ENCODE measurements at regions of chr6 and their contacts with region 1.

Region 1: DNA sequence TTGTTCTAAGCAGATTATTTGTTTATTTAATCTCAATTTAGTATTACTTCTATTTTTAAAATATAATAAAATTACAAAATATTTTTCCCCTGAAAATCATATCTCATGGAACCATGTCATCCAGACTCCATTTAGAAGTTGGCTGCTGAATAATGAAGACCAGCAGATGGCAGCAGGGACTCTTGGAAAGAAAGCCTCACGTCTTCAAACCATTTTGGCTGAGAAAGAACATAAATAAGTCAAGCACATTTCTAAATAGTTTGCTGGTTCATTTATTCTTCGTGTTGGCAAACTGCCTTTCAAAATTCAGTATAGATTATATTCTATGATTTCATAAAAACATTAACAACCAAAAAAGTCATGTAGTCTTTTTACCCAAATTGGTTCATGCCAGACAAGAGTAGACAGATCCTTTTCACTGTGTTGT is 71.7 kb downstream of the RCAN2 start:
- DNase-seq: peak; percentile 36
- CTCF ChIP-seq: peak; percentile 55

Region 2: DNA sequence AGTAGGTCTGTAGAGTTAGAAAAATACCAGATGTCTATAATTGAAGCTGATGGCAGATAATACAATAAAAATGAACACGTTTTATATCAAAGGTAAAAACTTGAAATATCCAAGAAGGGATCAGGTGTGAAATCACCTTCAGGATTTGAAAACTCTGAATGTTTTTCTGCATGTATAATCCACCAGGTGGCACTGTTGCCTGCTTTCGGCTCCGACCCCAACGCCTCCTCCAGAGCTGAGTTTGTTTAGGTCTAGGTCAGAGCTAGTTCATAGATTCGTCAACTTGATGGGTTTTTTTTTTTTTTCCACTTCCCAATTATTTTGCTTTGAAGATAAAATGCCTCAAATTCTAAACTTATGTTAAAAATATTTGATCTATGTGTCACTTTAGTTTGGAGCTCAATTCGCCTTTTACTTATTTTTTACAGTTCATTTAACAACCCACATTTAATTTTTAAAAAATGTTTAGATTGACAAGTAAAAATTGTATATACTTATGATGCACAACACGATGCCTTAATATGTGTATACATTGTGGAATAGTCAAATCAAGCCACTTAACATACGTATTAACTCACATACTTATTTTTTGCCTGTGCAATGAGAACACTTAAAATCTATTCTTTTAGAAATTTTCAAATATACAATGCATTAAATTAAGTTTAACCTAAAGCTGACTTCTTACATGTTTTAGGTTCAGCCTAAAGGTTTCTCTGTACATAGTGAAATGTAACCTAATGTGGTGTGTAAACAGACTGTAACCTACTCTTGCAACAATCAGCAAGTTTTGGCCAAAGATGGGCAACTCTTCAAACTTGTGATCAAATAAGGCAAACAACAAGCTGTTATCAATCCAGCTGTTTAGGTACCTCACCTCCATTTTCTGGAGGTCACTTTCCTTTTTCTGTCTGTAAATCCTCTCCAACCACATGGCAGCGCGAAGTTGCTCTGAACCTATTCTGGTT is 329.2 kb before region 1 on chr6:
- in situ Hi-C with region 1: loop called (anchors 10 kb)
- DNase-seq: peak; percentile 61
- CTCF ChIP-seq: peak; percentile 58

Region 3: DNA sequence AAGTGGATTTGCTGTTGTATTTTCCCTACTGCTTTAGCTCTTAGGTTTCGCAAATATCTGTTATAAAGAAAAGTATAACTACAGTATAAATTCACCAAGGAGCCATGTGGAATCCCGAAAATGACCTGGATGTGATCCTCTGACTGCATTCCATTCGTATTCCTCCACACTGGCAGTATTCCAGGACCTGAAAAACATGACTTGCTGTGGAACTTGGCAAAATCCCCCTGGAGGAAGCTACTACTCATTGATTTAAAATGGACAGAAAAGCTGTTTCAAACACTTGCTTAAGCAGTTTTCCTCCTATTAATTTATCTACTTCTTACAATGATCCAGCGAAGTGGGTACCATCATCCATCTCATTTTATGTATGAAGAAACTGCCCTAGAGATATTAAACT is 235.5 kb before region 1 on chr6:
- in situ Hi-C with region 1: no loop called
- DNase-seq: no peak
- CTCF ChIP-seq: no peak